Posterior cingulate gyrus (tissue), 11 donors: ENCODE measurements at regions of chr3 and their contacts with region 1.

Region 1: GRCh38 chr3:191627064-191627463 is 166.1 kb downstream of the PYDC2 start:
- DNase-seq: peak; percentile 31 to 92 (median 54)

Region 2: DNA sequence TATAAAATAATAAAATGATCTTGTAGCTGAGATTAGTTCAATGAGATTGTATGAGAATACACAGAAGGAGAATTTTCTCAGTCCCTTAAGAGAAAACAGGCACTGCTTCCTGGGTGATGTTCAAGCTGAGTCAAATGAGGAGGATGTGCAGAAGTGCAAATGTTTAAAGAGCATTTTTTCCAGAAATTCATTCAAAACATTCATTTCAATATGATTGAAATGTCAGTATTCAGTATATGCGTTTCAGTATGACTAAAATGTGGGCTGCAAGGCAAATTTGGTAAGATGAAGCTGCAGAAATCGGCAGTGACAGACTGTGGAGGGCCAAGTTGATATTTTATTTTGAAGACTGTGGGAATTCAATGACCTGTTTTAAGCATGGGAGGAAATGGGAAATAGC is 185.4 kb before region 1 on chr3:
- intact Hi-C with region 1: loop called (anchors 10 kb)
- DNase-seq: no peak

Region 3: DNA sequence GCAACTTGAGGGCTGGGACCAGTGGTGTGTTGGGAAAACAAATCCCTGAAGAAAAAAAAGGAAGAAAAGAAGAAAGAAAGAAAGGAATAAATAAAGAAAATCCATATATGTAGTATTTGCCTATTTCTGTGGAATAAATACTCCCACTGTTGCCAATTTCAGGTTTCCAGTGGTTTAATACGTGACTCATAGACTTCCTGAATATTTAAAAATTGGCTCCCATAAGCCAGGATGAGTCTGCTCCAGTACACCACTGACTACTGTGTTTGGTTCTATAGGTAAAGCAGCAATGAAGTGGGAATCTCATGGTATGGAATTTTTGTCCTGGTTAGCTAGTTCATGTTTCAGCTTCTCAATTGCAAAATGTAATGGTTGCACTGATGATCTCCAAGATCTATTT is 134.5 kb before region 1 on chr3:
- intact Hi-C with region 1: loop called (anchors 2 kb)
- DNase-seq: no peak

Region 4: DNA sequence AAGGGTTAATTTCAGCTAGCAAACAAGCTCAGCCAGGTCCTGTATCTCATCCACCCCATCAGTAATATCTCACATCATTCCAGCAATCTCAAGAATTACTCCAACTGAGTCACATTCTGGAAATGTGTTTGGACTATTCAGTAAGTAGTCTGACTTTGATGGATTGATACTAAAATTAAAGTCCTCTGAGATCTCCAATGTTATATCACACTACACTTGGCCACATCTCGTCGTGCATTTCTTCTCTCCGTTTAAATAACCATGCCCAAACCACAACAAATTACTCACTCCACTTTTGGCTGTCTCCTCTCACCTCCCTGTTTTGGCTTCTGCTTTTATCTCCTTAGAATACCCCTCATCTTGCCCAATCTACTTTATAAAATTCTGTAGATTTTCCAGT is 126.1 kb after region 1 on chr3:
- intact Hi-C with region 1: no loop called
- DNase-seq: no peak